Psoas muscle (tissue), 8 donors: ENCODE measurements at regions of chr6 and their contacts with region 1.

Region 1: GRCh38 chr6:133300896-133301295 is 59.7 kb downstream of the EYA4 start:
- DNase-seq: no peak
- ATAC-seq: no peak
- H3K4me3 ChIP-seq: no peak overlapping the region
- H3K27ac ChIP-seq: no peak overlapping the region
- H3K4me1 ChIP-seq: peaks cover 69% of the 10 kb centered on the region
- H3K27me3 ChIP-seq: no peaks in the 10 kb centered on the region
- CTCF ChIP-seq: no peak

Region 2: GRCh38 chr6:133130863-133131262 is 170.0 kb before region 1 on chr6:
- intact Hi-C with region 1: no loop called
- DNase-seq: peak; percentile 63 to 89
- ATAC-seq: peak; percentile 92 to 96 (median 96)
- H3K4me3 ChIP-seq: no peak overlapping the region
- H3K27ac ChIP-seq: peak overlapping the region; percentile 91
- H3K4me1 ChIP-seq: peaks cover 52% of the 10 kb centered on the region
- H3K27me3 ChIP-seq: no peaks in the 10 kb centered on the region
- CTCF ChIP-seq: peak; percentile 23

Region 3: GRCh38 chr6:133248241-133249001 is 52.5 kb before region 1 on chr6:
- intact Hi-C with region 1: loop called (anchors 5 kb)
- DNase-seq: no peak
- ATAC-seq: no peak
- H3K4me3 ChIP-seq: no peak overlapping the region
- H3K27ac ChIP-seq: no peak overlapping the region
- H3K4me1 ChIP-seq: peaks cover 49% of the 10 kb centered on the region
- H3K27me3 ChIP-seq: no peaks in the 10 kb centered on the region
- CTCF ChIP-seq: no peak

Region 4: GRCh38 chr6:133254552-133255228 is 46.2 kb before region 1 on chr6:
- intact Hi-C with region 1: loop called (anchors 5 kb)
- DNase-seq: no peak
- ATAC-seq: peak in 3 of 4 donors; percentile 62 to 80 (median 69)
- H3K4me3 ChIP-seq: no peak overlapping the region
- H3K27ac ChIP-seq: peak overlapping the region; percentile 58
- H3K4me1 ChIP-seq: peaks cover 68% of the 10 kb centered on the region
- H3K27me3 ChIP-seq: no peaks in the 10 kb centered on the region
- CTCF ChIP-seq: no peak

Region 5: DNA sequence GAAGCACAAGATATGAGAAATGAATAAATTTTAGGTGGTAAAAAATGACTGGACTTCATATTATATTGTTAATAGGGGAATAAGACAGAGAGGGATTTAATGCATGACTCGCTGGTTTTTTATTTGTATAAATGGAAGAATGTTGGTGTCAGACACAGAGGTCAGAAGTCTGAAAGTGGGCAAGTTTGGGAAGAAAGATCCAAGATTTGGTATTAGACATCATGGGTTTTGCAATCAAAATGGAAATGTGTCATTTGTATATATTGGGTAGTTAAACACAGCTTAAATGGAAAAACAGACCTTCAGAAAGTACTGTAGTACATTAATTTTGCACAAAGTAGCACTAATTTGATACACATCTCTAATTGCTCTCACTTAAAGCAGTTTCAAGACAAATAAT is 36.4 kb after region 1 on chr6:
- intact Hi-C with region 1: loop called in 1 of 2 experiments (anchors 5 kb)
- DNase-seq: no peak
- ATAC-seq: no peak
- H3K4me3 ChIP-seq: no peak overlapping the region
- H3K27ac ChIP-seq: no peak overlapping the region
- H3K4me1 ChIP-seq: peaks cover 52% of the 10 kb centered on the region
- H3K27me3 ChIP-seq: no peaks in the 10 kb centered on the region
- CTCF ChIP-seq: no peak

Region 6: GRCh38 chr6:133348846-133349245 is 48.0 kb after region 1 on chr6:
- intact Hi-C with region 1: loop called (anchors 5 kb)
- DNase-seq: no peak
- ATAC-seq: no peak
- H3K4me3 ChIP-seq: no peak overlapping the region
- H3K27ac ChIP-seq: no peak overlapping the region
- H3K4me1 ChIP-seq: peaks cover 55% of the 10 kb centered on the region
- H3K27me3 ChIP-seq: no peaks in the 10 kb centered on the region
- CTCF ChIP-seq: no peak